ENCODE measurements at regions of chr6 and their contacts with region 1.

Region 1: DNA sequence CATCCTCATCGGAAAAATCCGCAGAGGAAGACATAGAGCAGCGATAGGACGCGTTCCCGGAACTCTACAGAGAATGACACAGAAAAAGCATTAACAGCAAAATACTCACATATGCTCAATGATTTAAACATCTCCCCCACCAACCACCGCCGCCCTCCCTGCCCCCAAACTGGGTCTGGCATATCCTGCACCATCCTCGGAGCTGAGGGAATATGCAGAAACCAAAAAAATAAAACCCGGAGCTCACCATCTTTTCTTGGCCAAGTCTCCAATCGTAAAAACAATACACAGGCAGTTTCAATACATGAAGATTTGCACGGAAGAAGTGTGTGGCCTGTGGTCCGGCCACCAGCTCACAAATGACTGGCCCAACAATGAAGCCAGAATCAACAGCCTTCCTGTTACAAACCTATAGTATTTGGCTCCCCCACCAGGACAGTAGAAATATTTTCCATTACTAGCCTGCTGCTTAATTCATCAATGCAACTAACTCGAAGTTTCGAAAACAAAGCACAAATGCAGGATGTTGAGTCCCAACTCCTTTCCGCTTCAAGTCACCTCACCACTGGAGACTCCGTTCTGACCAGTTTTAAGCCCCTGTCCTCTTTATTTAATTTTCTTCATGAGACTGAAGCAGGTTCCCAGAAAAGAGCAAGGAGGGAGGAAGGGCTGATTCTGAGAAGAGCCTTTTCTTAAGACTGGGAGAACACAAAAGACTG is 103.2 kb upstream of the BEND6 start:
- DNase-seq: peak in 8 of 10 donors; percentile 25 to 67 (median 50)
- H3K4me3 ChIP-seq: peak overlapping the region; percentile 54 to 82 (median 72)
- H3K27ac ChIP-seq: peak overlapping the region; percentile 33 to 95 (median 88)
- H3K27me3 ChIP-seq: no peaks in the 10 kb centered on the region
- CTCF ChIP-seq: peak; percentile 51 to 89 (median 76)

Region 2: GRCh38 chr6:56359201-56359899 is 492.4 kb before region 1 on chr6:
- intact Hi-C with region 1: loop called in 1 of 2 experiments (anchors 5 kb)
- DNase-seq: peak in 8 of 10 donors; percentile 21 to 83 (median 55)
- H3K4me3 ChIP-seq: peak overlapping the region in 2 of 59 donors; percentile 9 to 24
- H3K27ac ChIP-seq: no peak overlapping the region
- H3K27me3 ChIP-seq: no peaks in the 10 kb centered on the region
- CTCF ChIP-seq: peak; percentile 78 to 97 (median 90)

Region 3: GRCh38 chr6:56540232-56541029 is 311.3 kb before region 1 on chr6:
- intact Hi-C with region 1: no loop called
- DNase-seq: no peak
- H3K4me3 ChIP-seq: peak overlapping the region; percentile 5 to 80 (median 63)
- H3K27ac ChIP-seq: peak overlapping the region in 56 of 59 donors; percentile 13 to 94 (median 84)
- H3K27me3 ChIP-seq: no peaks in the 10 kb centered on the region
- CTCF ChIP-seq: peak in 3 of 56 donors; percentile 7 to 16 (median 14)

Region 4: GRCh38 chr6:56637640-56638039 is 214.1 kb before region 1 on chr6:
- intact Hi-C with region 1: loop called (anchors 5 kb)
- DNase-seq: no peak
- H3K4me3 ChIP-seq: no peak overlapping the region
- H3K27ac ChIP-seq: peak overlapping the region in 46 of 59 donors; percentile 2 to 83 (median 58)
- H3K27me3 ChIP-seq: no peaks in the 10 kb centered on the region
- CTCF ChIP-seq: peak; percentile 59 to 94 (median 79)

Region 5: DNA sequence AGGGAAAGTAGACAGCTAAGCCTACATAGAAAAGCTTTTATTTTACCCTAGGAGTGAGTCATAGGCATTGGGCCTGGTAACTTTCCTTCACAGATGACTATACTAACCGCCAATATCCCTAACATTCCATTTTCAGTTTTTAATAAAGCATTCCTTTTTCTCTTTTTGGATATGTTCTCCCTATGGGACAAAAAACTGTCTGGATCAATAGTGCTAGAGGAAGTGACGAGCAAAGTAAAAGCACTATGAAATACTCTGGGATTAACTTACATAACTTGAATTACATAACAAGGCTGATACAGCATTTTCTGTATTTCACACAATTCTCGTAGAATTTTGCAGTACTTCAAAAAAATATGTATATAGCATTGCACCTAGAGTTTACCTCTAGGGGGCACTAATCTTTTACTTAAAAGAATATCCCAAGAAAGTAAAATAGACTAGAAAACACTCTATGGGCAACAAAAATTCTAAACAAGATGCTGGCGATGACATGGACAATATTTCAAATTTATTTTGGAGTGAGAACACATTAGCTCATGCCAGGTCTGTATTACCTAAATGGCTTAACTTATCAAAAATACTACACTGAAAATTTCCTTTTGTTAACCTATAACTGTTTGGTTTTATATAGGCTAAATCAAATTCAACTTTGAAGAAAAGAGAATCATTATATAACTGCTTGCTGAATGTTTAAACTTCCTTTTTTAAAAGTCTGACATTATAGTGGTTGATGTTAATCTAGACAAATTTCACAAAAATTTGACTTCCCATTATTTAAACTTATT is 142.7 kb before region 1 on chr6:
- intact Hi-C with region 1: loop called in 1 of 2 experiments (anchors 2 kb)
- DNase-seq: no peak
- H3K4me3 ChIP-seq: peak overlapping the region in 8 of 59 donors; percentile 0 to 20 (median 11)
- H3K27ac ChIP-seq: peak overlapping the region; percentile 40 to 95 (median 88)
- H3K27me3 ChIP-seq: no peaks in the 10 kb centered on the region
- CTCF ChIP-seq: peak; percentile 46 to 88 (median 73)

Region 6: GRCh38 chr6:56757588-56757984 is 94.1 kb before region 1 on chr6:
- intact Hi-C with region 1: loop called (anchors 2 to 5 kb)
- DNase-seq: peak in 3 of 10 donors; percentile 49 to 56 (median 55)
- H3K4me3 ChIP-seq: peak overlapping the region in 16 of 59 donors; percentile 0 to 32 (median 9)
- H3K27ac ChIP-seq: peak overlapping the region; percentile 13 to 91 (median 86)
- H3K27me3 ChIP-seq: no peaks in the 10 kb centered on the region
- CTCF ChIP-seq: peak in 54 of 56 donors; percentile 28 to 75 (median 54)